T-cell (primary cell): ENCODE measurements at regions of chr21 and their contacts with region 1.

Region 1: GRCh38 chr21:29024474-29025327 is at the start of gene USP16:
- DNase-seq: peak; percentile 90 to 97 (median 93)
- ATAC-seq: peak; percentile 90 to 94 (median 94)
- H3K4me3 ChIP-seq: peak within 1 kb of the TSS; percentile 89 to 97
- H3K4me3 Mint-ChIP-seq: peak within 1 kb of the TSS; percentile 92 to 99 (median 98)
- H3K27ac ChIP-seq: peak within 1 kb of the TSS; percentile 100
- H3K27ac Mint-ChIP-seq: peak within 1 kb of the TSS; percentile 97 to 100
- H3K4me1 ChIP-seq: peaks cover 21 to 41% of the 10 kb centered on the region in 2 experiments
- H3K4me1 Mint-ChIP-seq: peaks cover 50 to 61% (median 60%) of the 10 kb centered on the region in 3 donors
- H3K27me3 ChIP-seq: no peaks in the 10 kb centered on the region
- H3K27me3 Mint-ChIP-seq: no peaks in the 10 kb centered on the region
- total RNA-seq, gene USP16: 41.8 to 68.7 (median 45.4) TPM

Region 2: DNA sequence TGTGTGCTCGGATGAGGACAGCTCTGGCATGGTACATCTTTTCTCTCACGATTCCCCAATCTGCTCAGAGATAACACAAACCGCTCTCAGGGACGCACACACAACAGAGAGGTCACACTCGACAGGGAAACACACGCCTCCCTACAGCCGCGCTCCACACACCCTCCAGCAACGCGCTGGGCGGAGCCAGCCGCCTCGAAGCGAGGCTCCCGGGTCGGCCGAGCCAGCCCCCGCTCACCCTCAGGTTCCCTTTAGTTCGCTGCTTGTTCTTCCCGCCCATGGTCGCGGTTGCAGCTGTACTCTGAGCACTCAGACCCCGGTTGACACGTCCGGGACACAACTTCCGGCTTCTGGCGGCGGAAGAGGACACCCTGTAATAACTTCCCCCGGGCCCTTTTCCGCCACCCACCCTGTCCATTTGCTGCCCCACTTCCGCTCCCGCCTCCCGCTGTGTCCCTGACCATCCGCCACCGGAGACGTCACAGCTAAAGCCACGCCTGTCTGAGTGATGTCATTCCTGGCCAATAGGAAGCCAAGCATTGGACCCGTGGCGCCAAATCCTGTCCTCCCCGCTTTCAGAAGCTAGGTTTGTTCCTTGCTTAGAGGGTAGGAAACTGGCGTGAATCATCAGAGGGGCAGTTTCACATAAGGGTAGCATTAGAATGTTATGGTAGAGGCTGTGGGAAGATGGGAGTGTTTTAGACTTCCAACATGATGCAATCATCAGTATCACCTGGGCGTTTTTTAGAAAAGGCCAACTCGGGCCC is 32.0 kb before region 1 on chr21 and contains the start of gene LTN1:
- CTCF ChIA-PET with region 1: interaction called, 5 to 16 read pairs
- POLR2A ChIA-PET with region 1: interaction called, 7 to 23 read pairs
- DNase-seq: peak; percentile 96 to 99 (median 98)
- ATAC-seq: peak; percentile 94 to 98 (median 98)
- H3K4me3 ChIP-seq: peak within 1 kb of the TSS; percentile 92 to 98
- H3K4me3 Mint-ChIP-seq: peak within 1 kb of the TSS; percentile 96 to 97 (median 96)
- H3K27ac ChIP-seq: peak within 1 kb of the TSS; percentile 90
- H3K27ac Mint-ChIP-seq: peak within 1 kb of the TSS; percentile 96 to 99
- H3K4me1 ChIP-seq: peaks cover 9 to 20% of the 10 kb centered on the region in 2 experiments
- H3K4me1 Mint-ChIP-seq: peaks cover 28 to 48% (median 40%) of the 10 kb centered on the region in 3 donors
- H3K27me3 ChIP-seq: no peaks in the 10 kb centered on the region
- H3K27me3 Mint-ChIP-seq: no peaks in the 10 kb centered on the region
- total RNA-seq, gene LTN1: 23.4 to 34.1 (median 25.2) TPM

Region 3: DNA sequence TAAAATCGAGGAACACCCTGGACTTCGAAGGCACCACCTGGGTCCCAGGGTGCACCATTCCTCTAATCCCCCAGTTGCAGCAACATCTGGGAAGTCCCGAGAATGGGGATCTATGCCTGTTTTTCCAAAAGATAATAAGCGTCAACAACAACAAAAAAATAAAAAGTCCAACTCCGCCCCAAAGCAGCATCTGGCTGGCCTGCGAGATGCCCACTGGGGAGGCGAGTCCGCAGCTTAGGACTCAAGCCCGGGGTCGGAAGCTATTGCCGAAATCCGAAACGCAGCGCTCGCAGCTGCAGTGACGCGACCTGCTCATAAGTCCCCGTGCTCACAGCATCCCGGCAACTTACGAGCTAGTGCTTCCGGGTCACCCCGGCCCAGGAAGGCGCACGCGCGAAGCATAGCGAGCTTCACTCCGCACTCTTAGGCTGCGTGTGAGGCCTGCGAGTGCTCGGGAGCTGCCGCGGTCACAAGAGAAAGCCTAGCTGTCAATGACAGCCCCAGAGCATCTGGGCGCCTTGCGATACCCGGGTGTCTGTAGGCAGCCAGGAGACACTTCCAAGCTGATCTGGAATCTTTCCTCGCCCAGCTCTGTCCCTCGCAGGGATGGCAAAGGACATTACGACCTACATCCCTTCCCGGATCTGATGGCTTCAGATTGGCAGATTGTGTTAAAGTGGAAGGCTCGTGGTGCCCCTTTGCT is 22.1 kb before region 1 on chr21:
- CTCF ChIA-PET with region 1: interaction called, 8 to 19 read pairs
- POLR2A ChIA-PET with region 1: interaction called, 25 to 106 read pairs
- DNase-seq: peak; percentile 81 to 98 (median 96)
- ATAC-seq: peak; percentile 100
- H3K4me3 ChIP-seq: peak overlapping the region; percentile 71 to 90
- H3K4me3 Mint-ChIP-seq: peak overlapping the region; percentile 87 to 91 (median 90)
- H3K27ac ChIP-seq: peak overlapping the region; percentile 95
- H3K27ac Mint-ChIP-seq: peak overlapping the region; percentile 96 to 99
- H3K4me1 ChIP-seq: peaks cover 6 to 13% of the 10 kb centered on the region in 2 experiments
- H3K4me1 Mint-ChIP-seq: peaks cover 6 to 16% (median 14%) of the 10 kb centered on the region in 3 donors
- H3K27me3 ChIP-seq: no peaks in the 10 kb centered on the region
- H3K27me3 Mint-ChIP-seq: no peaks in the 10 kb centered on the region

Region 4: GRCh38 chr21:29073222-29074006 is 48.7 kb after region 1 on chr21 and contains the start of gene CCT8:
- CTCF ChIA-PET with region 1: interaction called in 1 of 2 experiments, 12 read pairs
- POLR2A ChIA-PET with region 1: interaction called, 10 to 12 read pairs
- DNase-seq: peak; percentile 94 to 100 (median 99)
- ATAC-seq: peak; percentile 91 to 94 (median 92)
- H3K4me3 ChIP-seq: peak within 1 kb of the TSS; percentile 89 to 97
- H3K4me3 Mint-ChIP-seq: peak within 1 kb of the TSS; percentile 98 to 100 (median 100)
- H3K27ac ChIP-seq: peak within 1 kb of the TSS; percentile 84
- H3K27ac Mint-ChIP-seq: peak within 1 kb of the TSS; percentile 98 to 99
- H3K4me1 ChIP-seq: peaks cover 30 to 31% of the 10 kb centered on the region in 2 experiments
- H3K4me1 Mint-ChIP-seq: peaks cover 51 to 68% (median 67%) of the 10 kb centered on the region in 3 donors
- H3K27me3 ChIP-seq: no peaks in the 10 kb centered on the region
- H3K27me3 Mint-ChIP-seq: no peaks in the 10 kb centered on the region
- total RNA-seq, gene CCT8: 103 to 131 (median 115) TPM

Region 5: DNA sequence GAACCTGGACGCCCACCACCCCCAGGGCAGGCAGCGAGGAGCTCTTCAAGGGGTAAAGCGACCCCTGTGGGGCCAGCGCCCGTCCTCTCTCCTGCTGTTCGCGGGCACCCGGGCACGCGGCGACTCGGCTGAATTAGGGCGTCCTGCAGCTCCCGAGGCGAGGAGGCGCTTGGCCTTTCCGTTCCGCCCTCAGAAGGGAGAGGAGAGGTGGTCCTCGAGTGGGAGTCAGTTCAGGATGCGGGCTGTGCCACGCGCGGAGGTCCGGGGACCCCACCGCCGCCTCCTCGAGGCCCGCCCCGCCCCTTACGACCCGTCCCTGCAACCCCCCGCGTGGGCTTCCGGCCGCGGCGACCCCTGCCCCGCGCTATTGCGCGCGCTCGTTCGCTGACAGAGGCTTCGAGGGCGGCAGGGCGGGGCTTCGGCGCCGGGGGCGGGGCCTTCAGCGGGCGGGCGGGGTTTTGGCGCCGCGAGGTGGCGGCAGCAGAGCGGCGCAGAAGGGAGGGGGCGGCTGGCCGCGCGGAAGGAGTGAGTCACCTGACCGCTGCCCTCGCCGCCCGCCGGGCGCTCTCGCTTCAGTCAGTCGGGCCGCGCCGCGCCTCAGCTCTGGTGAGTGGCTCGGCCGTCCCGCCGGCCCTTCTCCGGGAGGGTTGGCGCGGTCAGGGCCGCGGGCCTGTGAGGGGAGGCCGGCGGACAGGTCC is 273.8 kb after region 1 on chr21 and contains the start of gene BACH1:
- CTCF ChIA-PET with region 1: interaction called in 1 of 2 experiments, 3 read pairs
- POLR2A ChIA-PET with region 1: interaction called, 3 to 10 read pairs
- DNase-seq: peak; percentile 48 to 91 (median 78)
- ATAC-seq: peak; percentile 73 to 84 (median 78)
- H3K4me3 ChIP-seq: peak within 1 kb of the TSS; percentile 64 to 73
- H3K4me3 Mint-ChIP-seq: peak within 1 kb of the TSS; percentile 79 to 87 (median 87)
- H3K27ac ChIP-seq: peak within 1 kb of the TSS; percentile 52
- H3K27ac Mint-ChIP-seq: peak within 1 kb of the TSS; percentile 75 to 77
- H3K4me1 ChIP-seq: peaks cover 17 to 21% of the 10 kb centered on the region in 2 experiments
- H3K4me1 Mint-ChIP-seq: peaks cover 74 to 79% (median 78%) of the 10 kb centered on the region in 3 donors
- H3K27me3 ChIP-seq: peaks cover 0 to 3% of the 10 kb centered on the region in 2 experiments
- H3K27me3 Mint-ChIP-seq: no peaks in the 10 kb centered on the region
- total RNA-seq, gene BACH1: 42.9 to 54.8 (median 52.8) TPM